ENCODE measurements at regions of chr12 and their contacts with region 1.

Region 1: DNA sequence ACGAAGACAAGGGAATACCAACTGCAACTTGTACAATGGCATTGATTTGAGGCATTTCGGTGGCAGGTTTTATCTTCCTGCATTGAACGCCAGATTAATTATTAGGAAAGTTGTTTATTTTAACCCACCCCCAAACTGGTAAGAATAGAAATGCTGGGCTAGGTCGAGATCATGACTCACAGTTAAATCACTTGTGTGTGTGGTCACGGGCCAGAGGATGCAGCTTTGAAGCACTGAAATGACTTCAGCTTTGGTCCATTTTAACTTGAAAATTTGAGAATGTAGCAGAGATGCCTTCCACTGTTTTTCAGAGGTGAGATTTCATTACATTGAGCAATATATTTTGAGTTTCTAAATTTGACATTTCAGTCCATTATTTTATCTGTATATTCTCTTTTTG is 23.6 kb upstream of the KCNH3 start:
- DNase-seq: no peak
- ATAC-seq: no peak
- H3K4me3 Mint-ChIP-seq: no peak overlapping the region
- H3K27ac Mint-ChIP-seq: no peak overlapping the region
- H3K4me1 Mint-ChIP-seq: peaks cover 2% of the 10 kb centered on the region
- H3K27me3 Mint-ChIP-seq: peaks cover 1% of the 10 kb centered on the region

Region 2: GRCh38 chr12:49358483-49359141 is 156.7 kb before region 1 on chr12:
- POLR2A ChIA-PET with region 1: interaction called, 13 read pairs
- DNase-seq: no peak
- ATAC-seq: peak; percentile 95
- H3K4me3 Mint-ChIP-seq: no peak overlapping the region
- H3K27ac Mint-ChIP-seq: no peak overlapping the region
- H3K4me1 Mint-ChIP-seq: peaks cover 9% of the 10 kb centered on the region
- H3K27me3 Mint-ChIP-seq: peaks cover 28% of the 10 kb centered on the region

Region 3: GRCh38 chr12:49377386-49377785 is 137.9 kb before region 1 on chr12:
- POLR2A ChIA-PET with region 1: no interaction called
- DNase-seq: no peak
- ATAC-seq: no peak
- H3K4me3 Mint-ChIP-seq: no peak overlapping the region
- H3K27ac Mint-ChIP-seq: no peak overlapping the region
- H3K4me1 Mint-ChIP-seq: peaks cover 6% of the 10 kb centered on the region
- H3K27me3 Mint-ChIP-seq: no peaks in the 10 kb centered on the region

Region 4: GRCh38 chr12:49776413-49776812 is 261.1 kb after region 1 on chr12:
- POLR2A ChIA-PET with region 1: no interaction called
- DNase-seq: peak; percentile 64
- ATAC-seq: peak; percentile 89
- H3K4me3 Mint-ChIP-seq: no peak overlapping the region
- H3K27ac Mint-ChIP-seq: peak overlapping the region; percentile 74
- H3K4me1 Mint-ChIP-seq: peaks cover 13% of the 10 kb centered on the region
- H3K27me3 Mint-ChIP-seq: peaks cover 18% of the 10 kb centered on the region